Upper lobe of right lung (tissue), 1 donor: ENCODE measurements at regions of chrX and their contacts with region 1.

Region 1: GRCh38 chrX:110412971-110413721 is 54.5 kb downstream of the RTL9 start:
- DNase-seq: peak; percentile 72
- ATAC-seq: peak; percentile 96
- H3K4me3 ChIP-seq: no peak overlapping the region
- H3K27ac ChIP-seq: no peak overlapping the region
- H3K4me1 ChIP-seq: no peaks in the 10 kb centered on the region
- H3K27me3 ChIP-seq: no peaks in the 10 kb centered on the region
- CTCF ChIP-seq: peak; percentile 77

Region 2: GRCh38 chrX:110156167-110156754 is 256.9 kb before region 1 on chrX:
- intact Hi-C with region 1: loop called (anchors 10 kb)
- DNase-seq: no peak
- ATAC-seq: no peak
- H3K4me3 ChIP-seq: no peak overlapping the region
- H3K27ac ChIP-seq: no peak overlapping the region
- H3K4me1 ChIP-seq: no peaks in the 10 kb centered on the region
- H3K27me3 ChIP-seq: no peaks in the 10 kb centered on the region
- CTCF ChIP-seq: peak; percentile 50